ENCODE measurements at regions of chr14 and their contacts with region 1.

Region 1: GRCh38 chr14:59507063-59507780 is 22.9 kb downstream of the JKAMP start:
- DNase-seq: peak in 8 of 10 donors; percentile 23 to 85 (median 59)

Region 2: GRCh38 chr14:59018978-59019377 is 488.2 kb before region 1 on chr14:
- intact Hi-C with region 1: no loop called
- DNase-seq: no peak

Region 3: DNA sequence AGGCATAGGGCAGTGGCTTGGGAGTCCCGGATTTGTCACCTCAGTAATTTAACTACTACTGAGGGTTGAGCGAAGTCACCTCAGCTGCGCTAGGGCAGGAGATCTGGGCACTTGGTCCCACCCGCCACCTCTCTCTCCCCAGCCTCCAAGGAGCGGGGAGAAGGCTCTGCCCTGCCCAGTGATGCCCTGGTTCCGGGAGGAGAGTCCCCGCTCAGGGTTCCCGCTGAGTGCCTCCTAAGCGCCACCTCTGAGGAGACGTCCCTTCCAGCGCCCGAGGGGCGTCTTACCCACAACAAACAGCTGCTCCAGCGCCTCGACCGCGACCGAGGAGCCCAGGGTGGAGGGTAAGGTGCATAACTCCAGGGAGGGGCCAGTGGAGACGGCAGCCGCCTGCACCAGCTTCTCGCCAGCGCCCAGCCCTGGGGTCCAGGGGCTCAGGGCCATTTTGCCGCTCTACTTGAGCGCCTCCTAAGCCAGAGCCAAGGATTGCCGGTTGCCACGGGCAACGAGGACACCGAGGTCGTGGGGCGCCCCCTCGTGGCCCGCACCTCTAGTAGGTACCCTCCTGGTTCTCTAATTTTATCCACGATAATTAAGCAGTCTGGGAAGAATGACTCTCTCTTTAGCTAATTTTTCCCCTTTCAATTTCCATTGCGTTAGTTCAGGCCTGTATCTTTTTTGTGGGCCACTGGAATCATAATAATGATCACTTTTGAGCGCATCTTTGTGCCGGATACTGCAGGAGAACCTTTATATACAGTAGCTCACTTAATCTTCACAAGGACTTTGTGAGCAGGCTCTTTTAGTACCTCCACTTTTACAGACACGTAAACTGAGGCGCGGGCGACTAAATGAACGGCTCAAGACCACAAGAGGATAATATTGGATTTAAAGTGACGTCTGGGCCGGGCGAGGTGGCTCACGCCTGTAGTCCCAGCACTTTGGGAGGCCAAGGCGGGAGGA is 69.4 kb after region 1 on chr14 and contains the start of gene CCDC175:
- intact Hi-C with region 1: loop called (anchors 5 kb)
- DNase-seq: peak; percentile 59 to 97 (median 83)

Region 4: DNA sequence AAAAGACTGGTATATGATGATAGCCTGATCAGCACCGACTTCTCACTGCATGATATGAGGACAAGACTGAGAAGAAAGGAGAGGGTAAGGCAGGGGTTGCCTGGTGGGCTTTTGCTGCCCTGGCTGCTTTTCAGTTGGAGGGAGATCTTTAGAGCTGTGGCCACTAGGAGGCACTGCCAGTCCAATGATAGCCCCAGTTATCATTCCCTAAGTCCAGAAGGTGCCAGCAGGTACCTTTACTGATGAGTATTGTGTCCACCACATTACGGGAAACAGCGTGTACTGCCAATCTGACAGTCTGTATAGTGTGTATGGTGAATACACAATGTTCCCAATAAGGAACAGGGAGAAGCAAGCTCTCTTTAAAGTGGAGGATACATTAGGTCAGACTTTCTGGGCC is 125.2 kb after region 1 on chr14:
- intact Hi-C with region 1: no loop called
- DNase-seq: peak in 2 of 10 donors; percentile 20 to 58

Region 5: GRCh38 chr14:60590991-60591414 is 1083.8 kb after region 1 on chr14:
- intact Hi-C with region 1: no loop called
- DNase-seq: no peak